ENCODE measurements at regions of chr5 and their contacts with region 1.

Region 1: GRCh38 chr5:141849375-141850243 is 28.6 kb downstream of the PCDH1 start:
- DNase-seq: peak; percentile 84
- H3K4me3 Mint-ChIP-seq: peak overlapping the region; percentile 86
- H3K27ac Mint-ChIP-seq: peak overlapping the region; percentile 75
- H3K4me1 Mint-ChIP-seq: peaks cover 16% of the 10 kb centered on the region
- H3K27me3 Mint-ChIP-seq: no peaks in the 10 kb centered on the region

Region 2: GRCh38 chr5:141359790-141360426 is 489.7 kb before region 1 on chr5 and contains the start of gene PCDHGB2:
- CTCF ChIA-PET with region 1: no interaction called
- intact Hi-C with region 1: no loop called
- DNase-seq: peak; percentile 19
- H3K4me3 Mint-ChIP-seq: peak within 1 kb of the TSS; percentile 56
- H3K27ac Mint-ChIP-seq: no peak within 1 kb of the TSS
- H3K4me1 Mint-ChIP-seq: no peaks in the 10 kb centered on the region
- H3K27me3 Mint-ChIP-seq: peaks cover 82% of the 10 kb centered on the region
- total RNA-seq, gene PCDHGB2: not detected

Region 3: DNA sequence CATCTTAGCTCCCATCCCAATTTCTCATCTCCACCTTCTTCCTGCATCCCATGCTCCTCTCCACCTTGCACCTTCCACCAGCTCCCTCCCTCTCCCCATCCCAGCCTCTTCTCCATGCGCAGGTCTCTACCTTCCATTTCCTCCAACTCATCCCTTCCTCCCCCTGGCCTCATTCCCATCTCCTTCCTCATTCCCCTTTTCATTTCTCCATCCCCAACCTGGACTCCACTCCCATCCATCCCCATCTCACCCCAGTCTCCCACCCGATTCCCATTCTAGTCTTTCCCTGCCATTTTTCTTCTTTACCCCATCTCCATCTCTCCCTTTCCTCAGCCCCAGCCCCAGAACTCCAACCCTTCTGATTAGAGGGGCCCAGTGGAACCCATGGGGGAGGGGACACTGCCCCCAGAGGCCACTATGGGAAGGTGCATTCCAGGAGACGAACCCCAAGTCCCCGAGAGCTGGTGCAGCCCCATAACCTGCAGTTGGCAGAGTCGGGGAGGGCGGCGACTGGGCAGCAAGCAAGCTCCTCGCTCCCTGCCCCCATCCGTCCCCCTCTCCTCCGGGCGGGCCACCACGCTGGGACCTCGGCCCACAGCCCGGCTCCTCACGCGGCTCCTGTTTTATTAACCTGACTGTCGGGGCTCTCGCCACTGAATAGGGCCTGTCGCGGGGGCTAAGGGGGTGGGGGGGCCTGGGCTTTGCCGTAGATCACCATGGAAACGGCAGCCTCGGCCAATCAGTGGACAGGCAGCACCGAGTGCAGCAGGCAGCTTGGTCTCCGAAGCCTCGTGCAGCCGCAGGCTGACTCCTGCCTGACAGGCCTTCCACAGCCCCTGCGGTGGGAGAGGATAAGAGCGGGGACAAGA is 38.1 kb before region 1 on chr5:
- CTCF ChIA-PET with region 1: no interaction called
- intact Hi-C with region 1: no loop called
- DNase-seq: peak; percentile 25
- H3K4me3 Mint-ChIP-seq: no peak overlapping the region
- H3K27ac Mint-ChIP-seq: no peak overlapping the region
- H3K4me1 Mint-ChIP-seq: no peaks in the 10 kb centered on the region
- H3K27me3 Mint-ChIP-seq: peaks cover 44% of the 10 kb centered on the region

Region 4: DNA sequence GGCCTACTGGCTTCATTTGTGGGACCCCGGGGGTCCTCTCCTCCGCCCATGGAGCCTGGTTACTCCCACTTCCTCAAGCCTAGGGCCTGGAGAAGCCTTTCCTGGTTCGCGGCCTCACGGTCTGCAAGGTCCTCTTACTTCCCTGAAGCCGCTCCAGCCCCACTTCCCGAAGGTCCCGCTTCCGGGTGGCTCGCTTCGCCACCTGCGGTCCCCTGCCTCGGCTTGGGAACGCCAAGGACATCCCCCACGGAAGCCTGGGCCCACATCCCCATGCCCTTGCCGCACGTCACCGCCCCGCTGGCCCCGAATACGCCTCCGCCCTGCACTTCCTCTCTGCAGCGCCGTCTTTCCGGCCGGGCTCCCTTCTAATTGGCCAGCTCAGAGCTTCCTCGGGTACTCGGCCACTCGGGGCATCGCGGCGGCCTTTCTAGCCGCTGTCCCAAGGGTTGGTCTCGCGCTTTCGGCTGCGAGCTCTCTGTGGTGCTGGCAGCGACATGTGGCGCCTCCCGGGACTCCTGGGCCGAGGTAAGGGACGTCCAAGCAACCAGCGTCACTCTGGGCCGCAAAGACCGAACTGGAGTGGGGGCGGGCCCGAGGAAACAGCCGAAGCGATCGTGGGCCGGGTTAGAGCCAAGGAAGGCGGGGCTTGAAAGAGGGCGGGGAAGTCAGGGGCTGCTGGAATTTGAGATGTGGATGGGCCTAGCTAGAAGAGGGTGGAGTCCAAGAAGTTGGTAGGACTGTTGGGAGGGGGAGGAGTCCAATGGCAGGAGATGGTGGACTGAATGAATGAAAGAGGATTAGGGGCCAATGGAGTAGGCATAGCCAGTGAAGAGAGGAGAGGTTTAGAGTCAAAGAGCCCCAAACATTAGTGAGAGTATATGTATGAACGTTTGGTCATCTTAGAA is 74.1 kb after region 1 on chr5 and contains the start of gene DELE1:
- CTCF ChIA-PET with region 1: no interaction called
- intact Hi-C with region 1: loop called (anchors 1 kb)
- DNase-seq: peak; percentile 95
- H3K4me3 Mint-ChIP-seq: peak within 1 kb of the TSS; percentile 90
- H3K27ac Mint-ChIP-seq: peak within 1 kb of the TSS; percentile 93
- H3K4me1 Mint-ChIP-seq: peaks cover 18% of the 10 kb centered on the region
- H3K27me3 Mint-ChIP-seq: no peaks in the 10 kb centered on the region
- total RNA-seq, gene DELE1: 48.0 to 50.6 TPM

Region 5: DNA sequence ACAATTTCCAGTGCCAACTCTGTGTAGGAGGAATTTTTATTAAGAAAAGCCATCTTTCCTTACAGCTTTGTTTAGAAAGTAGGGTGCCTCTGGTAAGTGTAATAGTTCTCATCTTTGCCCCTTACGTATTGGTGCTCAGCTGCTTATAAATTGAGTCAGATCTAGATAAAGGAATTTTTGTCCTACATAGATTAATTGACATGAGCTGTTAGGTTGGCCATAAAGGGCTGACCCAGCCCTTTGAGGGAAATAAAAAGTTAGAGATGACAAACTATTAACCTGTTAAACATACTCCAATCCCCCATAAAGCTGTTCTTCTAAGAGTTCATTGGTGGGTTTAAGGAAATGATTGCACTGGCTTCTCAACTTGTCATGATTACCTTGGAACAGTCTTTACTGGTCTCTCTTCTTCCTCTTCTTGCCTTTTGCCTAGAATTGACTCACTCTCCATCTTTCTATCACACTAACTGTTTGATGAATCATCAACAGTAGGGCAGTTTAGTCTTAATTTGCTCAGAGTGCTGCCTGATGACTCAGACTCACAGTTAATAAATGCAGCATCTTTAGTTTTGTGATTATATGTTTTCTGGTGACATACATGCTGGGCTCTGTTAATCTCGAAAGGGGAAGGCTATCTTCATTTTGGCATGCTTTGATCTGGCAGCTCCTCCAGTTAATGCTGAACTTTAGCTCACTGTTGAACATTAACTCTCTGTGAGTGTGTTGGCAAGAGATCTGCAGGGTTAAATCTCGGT is 972.3 kb after region 1 on chr5:
- CTCF ChIA-PET with region 1: no interaction called
- intact Hi-C with region 1: no loop called
- DNase-seq: peak; percentile 49
- H3K4me3 Mint-ChIP-seq: no peak overlapping the region
- H3K27ac Mint-ChIP-seq: peak overlapping the region; percentile 54
- H3K4me1 Mint-ChIP-seq: peaks cover 78% of the 10 kb centered on the region
- H3K27me3 Mint-ChIP-seq: no peaks in the 10 kb centered on the region